ENCODE measurements at regions of chr2 and their contacts with region 1.

Region 1: DNA sequence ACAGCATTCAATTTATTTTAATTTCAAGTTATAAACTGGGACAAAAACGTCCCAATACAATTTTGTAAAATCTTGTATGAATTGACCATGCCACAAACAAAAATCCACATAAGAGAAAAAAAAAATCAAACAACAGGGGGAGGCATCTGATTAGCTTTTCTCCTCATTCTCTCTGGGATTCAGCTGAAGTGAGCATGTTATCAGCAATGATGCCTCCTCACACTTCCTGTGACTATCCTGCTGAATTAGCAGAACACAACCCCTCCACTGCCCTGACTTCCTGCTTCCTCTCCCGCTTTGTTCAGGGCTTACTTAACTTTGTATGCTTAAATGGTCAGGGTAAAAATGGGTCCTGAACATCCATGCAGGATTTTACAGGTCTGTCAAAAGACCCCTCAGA is 132.2 kb upstream of the ITGB6 start:
- DNase-seq: no peak

Region 2: DNA sequence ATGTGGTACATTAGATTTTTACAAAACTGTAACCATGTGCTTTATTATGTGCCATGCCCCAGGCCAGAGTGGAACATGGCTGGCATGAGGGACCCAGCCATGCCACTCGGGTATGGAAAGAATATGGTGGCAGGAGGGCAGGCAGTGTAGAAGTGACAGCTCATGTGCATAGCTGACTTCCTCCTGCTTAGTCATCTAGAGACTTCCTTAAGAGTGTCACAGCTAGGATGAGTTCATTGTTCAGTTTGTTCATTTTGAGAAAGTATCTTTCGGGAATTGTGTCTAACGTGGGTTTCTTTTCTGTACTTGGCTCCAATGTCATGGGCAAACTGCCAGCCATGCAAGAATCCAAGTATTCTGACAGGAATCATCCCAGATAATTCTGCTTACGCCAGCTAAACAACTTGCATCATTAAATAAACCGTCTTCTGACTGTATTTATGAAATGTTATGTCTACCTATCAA is 37.9 kb before region 1 on chr2:
- intact Hi-C with region 1: loop called (anchors 5 kb)
- DNase-seq: no peak

Region 3: GRCh38 chr2:160375802-160376469 is 43.6 kb after region 1 on chr2:
- intact Hi-C with region 1: loop called (anchors 5 kb)
- DNase-seq: no peak

Region 4: DNA sequence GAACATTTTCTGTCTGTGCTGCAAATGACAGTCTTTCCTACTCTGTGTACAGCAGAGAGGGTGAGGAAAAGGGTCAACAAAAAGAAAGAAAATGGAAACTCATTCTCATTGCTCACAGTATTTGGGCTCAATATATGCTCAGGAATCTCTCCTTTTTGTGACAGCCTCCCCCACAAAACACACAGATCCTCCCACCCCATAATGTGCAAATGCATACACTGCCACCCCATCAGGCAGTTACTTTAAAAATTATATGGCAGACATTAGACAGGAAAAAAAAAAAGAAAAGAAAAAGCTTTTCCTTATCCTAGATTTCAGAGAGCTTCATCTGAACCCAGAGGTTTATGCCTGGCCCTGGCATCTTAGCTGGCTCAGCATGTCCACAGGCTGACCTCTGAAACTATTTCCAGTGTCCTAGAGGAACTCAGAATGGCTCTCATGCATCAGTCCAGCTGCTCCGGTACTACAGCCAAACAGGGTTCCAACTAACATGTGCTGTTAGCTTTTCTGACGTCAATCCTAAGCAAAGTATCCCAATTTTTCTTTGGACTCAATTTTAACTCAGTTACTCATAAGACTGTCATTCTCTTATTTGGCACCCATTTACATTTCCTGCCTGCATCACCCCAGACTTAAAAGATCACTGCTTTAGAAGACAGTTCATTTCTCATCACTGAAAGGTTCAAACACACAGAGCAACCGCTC is 55.4 kb after region 1 on chr2:
- intact Hi-C with region 1: loop called (anchors 5 kb)
- DNase-seq: no peak

Region 5: DNA sequence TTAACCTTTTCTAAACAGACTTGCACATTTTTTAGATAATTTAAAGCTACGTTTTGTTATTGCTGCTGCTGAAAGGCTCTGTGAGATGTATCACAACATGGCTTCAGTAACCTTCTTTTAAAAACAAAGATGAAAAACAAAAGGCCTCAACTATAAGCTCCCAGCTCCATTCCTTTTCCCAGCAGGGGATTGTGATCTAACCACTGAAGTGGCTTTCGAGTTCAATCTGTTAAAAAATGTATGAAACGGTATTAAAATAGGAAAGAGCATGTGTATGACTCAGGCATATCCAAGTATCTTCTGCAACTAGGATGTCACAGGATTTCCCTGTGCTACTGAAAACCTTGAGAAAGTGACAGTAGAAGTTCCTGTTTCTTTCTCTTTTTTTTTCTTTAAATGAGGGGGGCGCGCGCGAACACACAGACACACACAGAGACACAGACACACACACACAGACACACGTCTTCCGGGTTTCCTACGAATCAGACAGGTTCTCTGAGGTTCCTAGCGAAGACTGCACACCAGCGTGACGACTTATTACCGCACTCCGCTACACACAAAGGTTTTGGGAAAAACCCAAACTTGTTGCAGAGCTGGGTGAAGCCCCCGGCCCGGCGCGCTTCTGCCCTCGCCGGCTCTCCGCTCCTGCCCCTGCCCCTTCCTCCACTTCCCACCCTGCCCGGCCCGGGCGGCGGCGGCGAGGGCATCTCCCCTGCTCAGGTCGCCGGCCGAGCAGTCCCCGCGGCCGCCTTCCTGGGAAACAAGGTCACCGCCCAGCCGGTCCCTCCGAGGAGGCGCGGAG is 74.5 kb after region 1 on chr2:
- intact Hi-C with region 1: loop called (anchors 5 kb)
- DNase-seq: peak; percentile 78

Region 6: GRCh38 chr2:160429248-160430000 is 97.1 kb after region 1 on chr2:
- intact Hi-C with region 1: loop called (anchors 5 kb)
- DNase-seq: no peak